Right ventricle myocardium inferior (tissue), 1 donor: ENCODE measurements at regions of chr11 and their contacts with region 1.

Region 1: DNA sequence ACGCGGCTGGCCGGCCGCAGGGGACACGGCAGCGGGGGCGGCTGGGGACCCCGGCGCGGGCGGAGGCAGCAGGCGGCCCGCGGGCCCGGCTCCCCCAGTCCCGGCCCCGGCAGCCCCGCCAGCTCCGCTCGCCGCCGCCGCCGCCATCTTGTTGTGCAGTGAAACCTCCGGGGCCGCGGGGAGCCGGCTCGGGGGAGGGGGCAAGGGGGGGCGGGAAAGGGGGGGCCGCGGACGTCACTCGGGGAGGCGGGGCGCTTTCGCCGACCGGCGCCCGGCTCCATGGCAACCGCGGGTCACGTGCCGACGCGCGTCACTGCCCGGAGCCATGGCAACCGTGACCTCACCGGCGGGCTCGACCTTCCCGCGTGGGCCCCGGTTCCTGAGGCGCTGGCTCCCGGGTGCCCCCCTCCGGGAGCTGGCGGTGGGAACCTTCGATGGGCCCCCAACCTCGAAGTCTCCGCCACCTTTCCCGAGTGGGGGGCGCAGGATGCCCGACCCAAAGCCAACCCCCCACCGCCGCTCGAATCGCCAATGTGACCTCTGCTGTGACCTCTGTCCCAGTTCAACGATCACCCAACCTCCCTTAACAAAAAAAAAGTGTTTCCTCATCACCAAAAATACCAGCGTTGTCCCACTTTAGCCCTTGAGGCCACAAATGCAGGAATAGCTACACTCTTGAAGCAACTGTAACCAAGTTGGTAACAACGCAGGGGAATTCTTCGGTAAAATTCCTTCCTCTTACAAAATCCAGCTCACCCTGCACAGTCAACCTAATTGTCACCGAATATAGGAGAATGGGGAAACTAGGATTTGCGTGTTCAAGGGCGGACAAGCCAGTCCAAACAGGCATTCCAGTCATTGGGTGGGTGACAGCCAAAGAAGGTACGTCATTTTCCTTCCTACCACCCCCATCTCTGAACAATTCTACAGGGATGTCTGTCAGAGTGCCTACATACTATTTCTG is at the start of gene SIK3:
- DNase-seq: peak; percentile 97
- ATAC-seq: peak; percentile 90
- total RNA-seq, gene SIK3: 28.7 TPM

Region 2: DNA sequence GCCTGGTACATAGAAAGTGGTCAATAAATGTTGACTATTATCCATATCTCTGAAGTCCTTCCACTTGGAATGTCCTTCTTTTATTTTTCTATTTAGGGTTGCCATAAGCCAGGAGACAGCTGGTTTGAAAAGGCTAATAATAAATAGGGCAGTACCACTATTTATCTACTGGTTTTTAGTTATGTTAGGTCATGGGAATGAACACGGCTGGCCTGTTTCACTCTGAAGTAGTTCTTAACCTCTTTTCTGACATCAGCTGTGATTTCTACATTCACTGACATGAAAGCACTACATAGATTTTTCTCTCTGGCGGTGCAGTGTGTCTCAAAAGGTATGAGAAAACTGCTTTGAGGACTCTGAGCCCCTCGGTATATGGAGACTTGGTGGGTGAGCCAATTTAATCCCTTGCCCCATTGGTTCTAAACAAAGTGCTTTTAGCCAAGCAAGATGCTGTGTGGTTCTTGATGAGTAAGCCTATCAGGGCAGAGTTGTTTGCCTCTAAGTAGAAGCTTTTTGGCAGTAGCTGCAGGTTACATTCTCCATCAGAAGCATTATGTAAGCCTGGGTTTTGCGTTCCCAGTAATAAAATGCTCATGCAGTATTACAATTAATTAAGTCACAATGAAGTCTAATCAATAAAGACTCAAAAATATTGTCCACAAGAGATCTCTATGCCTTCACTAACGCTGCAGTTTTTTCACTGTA is 212.4 kb before region 1 on chr11:
- intact Hi-C with region 1: loop called (anchors 5 kb)
- DNase-seq: no peak
- ATAC-seq: peak; percentile 80

Region 3: GRCh38 chr11:116958246-116958645 is 140.3 kb before region 1 on chr11:
- intact Hi-C with region 1: loop called (anchors 5 kb)
- DNase-seq: no peak
- ATAC-seq: no peak

Region 4: DNA sequence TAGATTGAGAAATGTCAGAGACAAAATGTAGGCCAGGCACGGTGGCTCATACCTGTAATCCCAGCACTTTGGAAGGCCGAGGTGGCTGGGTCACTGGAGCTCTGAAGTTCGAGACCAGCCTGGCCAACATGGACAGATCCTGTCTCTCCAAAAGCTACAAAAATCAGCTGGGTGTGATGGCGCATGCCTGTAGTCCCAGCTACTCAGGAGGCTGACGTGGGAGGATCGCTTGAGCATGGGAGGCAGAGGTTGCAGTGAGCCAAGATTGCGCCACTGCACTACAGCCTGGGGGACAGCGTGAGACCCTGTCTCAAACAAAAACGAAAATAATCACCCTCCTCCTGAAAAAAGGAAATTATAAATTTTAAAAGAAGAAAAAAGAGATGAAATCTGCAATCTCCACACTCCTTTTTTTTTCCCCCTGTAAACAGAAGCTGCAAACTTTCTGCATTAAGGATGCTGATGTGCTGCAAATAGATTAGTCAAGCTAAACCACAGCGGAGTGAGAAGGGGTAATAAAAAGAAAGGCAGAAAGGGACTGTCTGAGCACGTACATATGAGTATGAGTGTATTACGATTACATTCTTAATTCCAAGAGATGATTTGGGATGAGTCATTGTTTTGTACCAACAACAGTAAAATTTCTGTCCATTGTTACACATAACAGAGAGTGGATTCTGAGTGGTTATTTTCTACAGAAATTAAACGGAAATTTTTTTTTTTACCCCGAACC is 87.6 kb before region 1 on chr11:
- intact Hi-C with region 1: no loop called
- DNase-seq: no peak
- ATAC-seq: no peak

Region 5: GRCh38 chr11:117171404-117172061 is 73.0 kb after region 1 on chr11:
- intact Hi-C with region 1: no loop called
- DNase-seq: no peak
- ATAC-seq: peak; percentile 14

Region 6: DNA sequence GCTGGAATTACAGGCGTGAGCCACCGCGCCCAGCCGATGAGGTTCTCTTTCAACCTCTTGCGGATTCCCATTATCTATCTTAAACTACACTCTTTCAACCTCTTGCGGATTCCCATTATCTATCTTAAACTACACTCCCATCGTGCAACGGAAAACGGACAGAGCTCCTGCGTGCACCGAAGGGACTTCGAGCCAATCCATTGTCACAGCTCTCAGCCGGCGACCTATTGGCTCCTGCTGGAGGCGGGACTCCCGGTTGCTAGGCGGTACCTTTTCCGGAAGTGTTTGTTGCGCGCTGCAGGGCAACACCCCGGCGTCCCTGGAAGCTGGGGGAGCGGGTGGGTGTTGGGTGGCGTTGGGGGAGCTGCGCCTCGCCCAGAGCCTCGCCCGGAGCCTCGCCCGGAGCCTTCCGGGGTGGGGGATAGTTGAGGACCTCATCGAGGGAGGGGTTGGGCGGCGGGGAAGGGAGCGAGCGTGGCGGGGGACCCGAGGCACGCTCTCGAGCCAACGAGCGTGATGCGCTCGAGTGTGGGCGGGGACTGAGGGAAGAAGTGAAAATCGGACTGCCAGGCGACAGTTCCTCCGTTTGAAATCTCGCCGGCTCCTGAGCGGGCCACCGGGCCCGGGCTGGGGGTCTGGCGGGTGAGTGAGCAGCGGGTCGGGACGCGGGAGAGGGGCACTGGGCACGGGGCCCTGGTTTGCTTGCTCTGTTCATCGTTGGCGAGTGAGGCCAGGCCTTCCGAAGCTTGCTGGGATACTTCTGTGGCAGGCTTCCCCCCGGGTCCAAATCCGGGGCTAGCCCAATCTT is 229.2 kb after region 1 on chr11 and contains the start of gene CEP164:
- intact Hi-C with region 1: loop called (anchors 5 kb)
- DNase-seq: peak; percentile 98
- ATAC-seq: peak; percentile 97
- total RNA-seq, gene CEP164: 4.7 TPM